ENCODE measurements at regions of chr17 and their contacts with region 1.

Region 1: DNA sequence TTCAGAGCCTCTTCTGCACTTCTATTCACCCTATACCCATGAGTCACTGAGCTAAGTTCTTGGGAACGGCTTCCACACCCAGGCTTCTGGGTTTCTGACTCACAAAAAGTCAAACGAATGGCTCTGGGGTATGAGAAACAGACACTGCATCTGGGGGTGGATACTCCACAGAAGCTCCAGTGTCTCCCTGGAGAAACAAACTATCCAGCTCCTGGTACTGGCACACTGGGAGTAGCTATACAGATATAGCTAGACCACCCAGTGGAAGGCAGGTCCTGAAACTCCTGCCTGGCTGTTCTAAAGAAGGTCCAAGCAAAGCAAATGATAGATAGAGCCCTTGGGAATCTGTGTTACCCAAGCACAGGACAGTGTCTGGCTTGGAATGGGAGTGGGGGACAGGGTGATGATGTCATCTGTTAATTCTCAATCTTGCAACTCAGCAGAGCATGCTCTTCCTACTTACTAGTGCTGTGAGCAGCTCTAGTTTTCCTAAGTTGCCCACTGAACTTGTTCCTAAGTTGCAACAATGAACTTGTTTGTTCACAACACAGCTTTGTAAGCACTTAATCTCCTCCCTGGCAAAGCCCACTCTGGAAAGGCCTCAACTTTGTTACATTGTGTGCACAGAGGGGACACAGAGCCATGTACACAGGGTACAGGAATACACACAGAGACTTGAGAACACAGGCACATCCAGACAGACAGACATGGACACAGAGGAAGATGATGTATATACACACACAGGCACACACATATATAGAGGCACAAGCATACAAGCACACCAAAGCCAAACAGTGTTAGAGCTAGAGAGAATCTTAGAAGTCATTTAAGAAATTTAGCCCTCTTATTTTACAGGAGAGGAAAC is 6.7 kb downstream of the MMP28 start:
- DNase-seq: no peak
- H3K4me3 ChIP-seq: peak overlapping the region in 1 of 7 experiments; percentile 25
- H3K27ac ChIP-seq: no peak overlapping the region
- H3K4me1 ChIP-seq: peaks cover 6 to 30% (median 16%) of the 10 kb centered on the region in 4 experiments
- H3K27me3 ChIP-seq: no peaks in the 10 kb centered on the region

Region 2: GRCh38 chr17:35747540-35748017 is 41.2 kb before region 1 on chr17:
- CTCF ChIA-PET with region 1: no interaction called
- POLR2A ChIA-PET with region 1: no interaction called
- DNase-seq: peak; percentile 81 to 91 (median 86)
- H3K4me3 ChIP-seq: no peak overlapping the region
- H3K27ac ChIP-seq: no peak overlapping the region
- H3K4me1 ChIP-seq: peaks cover 0 to 40% (median 30%) of the 10 kb centered on the region in 4 experiments
- H3K27me3 ChIP-seq: peaks cover 0 to 11% (median 0%) of the 10 kb centered on the region in 5 experiments

Region 3: DNA sequence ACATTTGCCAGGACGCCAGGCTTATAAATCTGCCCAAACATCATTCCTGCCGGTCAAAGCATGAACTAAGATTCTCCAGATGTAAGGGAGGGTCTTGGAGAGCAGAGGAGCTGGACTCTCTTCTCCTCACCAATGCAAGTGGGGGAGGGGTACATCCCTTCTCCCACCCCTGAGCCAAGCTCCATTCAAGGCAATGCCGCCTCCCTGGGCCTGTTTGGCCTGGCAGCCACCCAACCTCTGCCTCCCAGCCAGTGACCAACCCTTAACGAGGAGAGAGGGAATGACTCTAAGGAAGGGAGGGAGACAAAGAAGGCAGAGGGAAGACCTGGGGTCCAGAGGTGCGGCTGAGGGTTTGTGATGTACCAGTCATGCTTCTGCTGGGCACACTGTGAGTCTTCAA is 14.2 kb before region 1 on chr17:
- CTCF ChIA-PET with region 1: interaction called, 139 read pairs
- POLR2A ChIA-PET with region 1: no interaction called
- DNase-seq: no peak
- H3K4me3 ChIP-seq: no peak overlapping the region
- H3K27ac ChIP-seq: no peak overlapping the region
- H3K4me1 ChIP-seq: peaks cover 4 to 48% (median 38%) of the 10 kb centered on the region in 4 experiments
- H3K27me3 ChIP-seq: no peaks in the 10 kb centered on the region

Region 4: DNA sequence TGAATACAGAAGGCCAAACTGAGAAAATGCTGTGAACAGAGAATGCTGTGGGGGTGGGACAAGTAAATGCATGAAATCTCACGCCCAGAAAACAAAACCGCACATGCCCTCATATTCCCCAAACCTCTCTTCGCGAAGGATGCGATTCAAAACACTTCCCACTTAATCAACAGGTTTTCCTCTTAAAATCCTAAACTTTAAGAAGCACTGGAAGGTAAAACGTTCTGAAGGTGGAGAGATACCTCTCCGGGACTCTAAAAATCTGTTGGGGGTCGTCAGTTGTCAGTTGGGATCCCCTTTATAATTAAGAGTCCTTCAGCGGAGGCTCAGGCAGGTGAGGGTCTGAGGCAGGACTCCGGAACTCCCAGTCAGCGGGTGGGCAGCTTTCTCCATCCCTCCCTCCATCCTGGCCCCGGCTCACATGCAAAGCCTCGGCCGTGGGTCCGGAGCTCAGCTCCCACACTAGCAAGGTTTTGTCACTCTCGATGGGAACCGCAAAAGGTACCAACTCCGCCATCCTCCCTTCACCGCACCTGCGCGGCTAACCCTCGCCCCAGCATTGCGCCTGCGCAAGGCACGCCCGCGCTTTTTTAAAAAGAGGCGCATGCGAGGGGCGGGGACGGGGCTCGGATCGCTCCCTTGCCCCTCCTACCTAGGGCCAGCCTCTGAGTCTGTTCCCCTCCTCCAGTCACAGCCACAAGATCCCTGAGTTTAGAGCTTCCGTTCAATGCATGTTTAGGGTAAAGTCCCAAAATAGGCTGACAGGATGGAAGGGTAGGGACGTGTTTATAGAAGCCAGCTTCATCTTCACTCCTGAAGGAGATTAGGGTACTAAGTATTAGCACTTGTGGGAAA is 141.7 kb after region 1 on chr17 and contains the start of gene RDM1:
- CTCF ChIA-PET with region 1: no interaction called
- POLR2A ChIA-PET with region 1: no interaction called
- DNase-seq: peak; percentile 51 to 73 (median 69)
- H3K4me3 ChIP-seq: peak within 1 kb of the TSS; percentile 7 to 89 (median 70)
- H3K27ac ChIP-seq: no peak within 1 kb of the TSS
- H3K4me1 ChIP-seq: peaks cover 0 to 13% (median 12%) of the 10 kb centered on the region in 4 experiments
- H3K27me3 ChIP-seq: no peaks in the 10 kb centered on the region